Natural killer cell (primary cell): ENCODE measurements at regions of chr10 and their contacts with region 1.

Region 1: DNA sequence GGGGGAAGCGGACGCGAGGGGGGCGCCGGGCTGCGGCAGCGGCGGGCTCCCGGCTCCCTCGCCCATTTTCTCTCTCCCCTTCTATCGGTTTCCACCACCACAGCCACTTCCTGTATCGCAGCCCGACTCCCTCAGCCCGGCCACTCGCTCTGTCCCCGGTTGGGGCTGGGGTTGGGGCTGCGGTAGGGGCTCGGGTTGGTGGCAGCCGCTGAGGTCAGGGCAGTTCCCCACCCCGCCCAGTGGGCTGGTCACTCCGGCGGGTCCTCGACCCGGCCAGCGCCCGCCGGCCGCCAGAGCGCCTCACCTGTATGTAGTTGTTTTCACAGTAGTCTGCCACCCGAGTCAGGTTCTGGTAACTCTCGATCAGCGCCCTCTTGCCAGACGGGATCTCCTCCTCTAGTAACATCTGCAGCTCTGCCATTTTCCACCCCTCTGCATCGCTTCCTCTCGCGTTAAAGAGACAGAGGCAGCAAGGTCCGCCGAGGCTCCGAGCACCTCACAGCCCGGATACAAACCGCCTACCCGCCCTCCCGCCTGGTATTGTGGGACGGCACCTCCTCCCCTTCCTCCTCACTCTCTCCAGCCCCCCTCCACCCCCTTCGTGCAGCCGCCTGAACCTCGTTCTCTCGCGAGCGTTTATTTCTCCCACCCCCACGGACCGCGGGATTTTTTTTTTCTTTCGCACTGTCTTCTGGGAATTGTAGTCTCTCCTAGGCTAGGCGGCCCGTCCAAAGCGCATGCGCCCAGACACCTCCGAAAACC is at the start of gene ABI1:
- DNase-seq: peak; percentile 92 to 100
- ATAC-seq: peak; percentile 83 to 91 (median 86)
- H3K4me3 ChIP-seq: peak within 1 kb of the TSS; percentile 78
- H3K4me3 Mint-ChIP-seq: peak within 1 kb of the TSS; percentile 95
- H3K27ac ChIP-seq: peak within 1 kb of the TSS; percentile 91
- H3K27ac Mint-ChIP-seq: peak within 1 kb of the TSS; percentile 94 to 98
- H3K4me1 ChIP-seq: peaks cover 26% of the 10 kb centered on the region
- H3K4me1 Mint-ChIP-seq: peaks cover 44 to 48% of the 10 kb centered on the region in 2 donors
- H3K27me3 ChIP-seq: no peaks in the 10 kb centered on the region
- H3K27me3 Mint-ChIP-seq: peaks cover 3 to 7% of the 10 kb centered on the region in 2 donors
- CTCF ChIP-seq: no peak
- total RNA-seq, gene ABI1: 94.8 to 116 (median 113) TPM

Region 2: DNA sequence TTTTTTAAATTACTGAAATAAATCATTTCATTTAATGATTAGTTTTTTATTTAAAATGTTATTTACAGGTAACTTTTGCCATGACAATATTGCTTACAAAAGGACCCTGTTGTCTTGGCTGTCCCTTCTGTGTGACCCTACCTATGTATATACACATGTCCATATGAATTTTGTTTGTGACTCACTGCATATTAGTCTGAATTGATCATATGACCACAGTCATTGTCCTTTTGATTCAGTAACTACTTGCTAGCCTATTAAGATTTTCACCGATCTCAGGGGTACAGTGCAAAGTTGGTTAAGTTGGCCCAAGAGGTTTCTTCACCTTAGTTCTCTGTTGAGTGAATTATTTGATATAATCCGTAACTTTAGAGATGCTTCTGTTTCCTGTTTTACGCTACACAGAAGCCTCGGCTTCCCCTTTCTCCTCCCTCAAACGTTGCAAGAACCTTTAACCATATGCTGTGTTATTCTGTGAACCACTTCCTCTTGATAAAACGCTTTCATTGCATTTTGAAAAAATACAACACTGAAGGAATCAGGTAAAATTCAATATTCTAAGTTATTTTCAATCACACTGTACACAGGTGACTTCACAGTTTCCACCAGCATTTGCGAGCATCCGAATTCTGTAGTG is 378.6 kb before region 1 on chr10:
- intact Hi-C with region 1: loop called (anchors 10 kb)
- DNase-seq: peak in 1 of 2 donors; percentile 82
- ATAC-seq: peak; percentile 42 to 82 (median 71)
- H3K4me3 ChIP-seq: peak overlapping the region; percentile 20
- H3K4me3 Mint-ChIP-seq: peak overlapping the region; percentile 90
- H3K27ac ChIP-seq: peak overlapping the region; percentile 91
- H3K27ac Mint-ChIP-seq: peak overlapping the region; percentile 97 to 98
- H3K4me1 ChIP-seq: peaks cover 69% of the 10 kb centered on the region
- H3K4me1 Mint-ChIP-seq: peaks cover 74 to 78% of the 10 kb centered on the region in 2 donors
- H3K27me3 ChIP-seq: no peaks in the 10 kb centered on the region
- H3K27me3 Mint-ChIP-seq: no peaks in the 10 kb centered on the region
- CTCF ChIP-seq: no peak

Region 3: GRCh38 chr10:26779176-26779860 is 81.3 kb before region 1 on chr10:
- intact Hi-C with region 1: loop called (anchors 5 kb)
- DNase-seq: no peak
- ATAC-seq: no peak
- H3K4me3 ChIP-seq: no peak overlapping the region
- H3K4me3 Mint-ChIP-seq: no peak overlapping the region
- H3K27ac ChIP-seq: no peak overlapping the region
- H3K27ac Mint-ChIP-seq: peak overlapping the region; percentile 82 to 86
- H3K4me1 ChIP-seq: peaks cover 23% of the 10 kb centered on the region
- H3K4me1 Mint-ChIP-seq: peaks cover 91 to 93% of the 10 kb centered on the region in 2 donors
- H3K27me3 ChIP-seq: no peaks in the 10 kb centered on the region
- H3K27me3 Mint-ChIP-seq: no peaks in the 10 kb centered on the region
- CTCF ChIP-seq: no peak

Region 4: GRCh38 chr10:26829810-26830515 is 30.7 kb before region 1 on chr10:
- intact Hi-C with region 1: no loop called
- DNase-seq: no peak
- ATAC-seq: peak; percentile 49 to 69 (median 50)
- H3K4me3 ChIP-seq: no peak overlapping the region
- H3K4me3 Mint-ChIP-seq: peak overlapping the region; percentile 57
- H3K27ac ChIP-seq: peak overlapping the region; percentile 3
- H3K27ac Mint-ChIP-seq: peak overlapping the region; percentile 65 to 79
- H3K4me1 ChIP-seq: peaks cover 6% of the 10 kb centered on the region
- H3K4me1 Mint-ChIP-seq: peaks cover 78 to 82% of the 10 kb centered on the region in 2 donors
- H3K27me3 ChIP-seq: no peaks in the 10 kb centered on the region
- H3K27me3 Mint-ChIP-seq: no peaks in the 10 kb centered on the region
- CTCF ChIP-seq: no peak

Region 5: DNA sequence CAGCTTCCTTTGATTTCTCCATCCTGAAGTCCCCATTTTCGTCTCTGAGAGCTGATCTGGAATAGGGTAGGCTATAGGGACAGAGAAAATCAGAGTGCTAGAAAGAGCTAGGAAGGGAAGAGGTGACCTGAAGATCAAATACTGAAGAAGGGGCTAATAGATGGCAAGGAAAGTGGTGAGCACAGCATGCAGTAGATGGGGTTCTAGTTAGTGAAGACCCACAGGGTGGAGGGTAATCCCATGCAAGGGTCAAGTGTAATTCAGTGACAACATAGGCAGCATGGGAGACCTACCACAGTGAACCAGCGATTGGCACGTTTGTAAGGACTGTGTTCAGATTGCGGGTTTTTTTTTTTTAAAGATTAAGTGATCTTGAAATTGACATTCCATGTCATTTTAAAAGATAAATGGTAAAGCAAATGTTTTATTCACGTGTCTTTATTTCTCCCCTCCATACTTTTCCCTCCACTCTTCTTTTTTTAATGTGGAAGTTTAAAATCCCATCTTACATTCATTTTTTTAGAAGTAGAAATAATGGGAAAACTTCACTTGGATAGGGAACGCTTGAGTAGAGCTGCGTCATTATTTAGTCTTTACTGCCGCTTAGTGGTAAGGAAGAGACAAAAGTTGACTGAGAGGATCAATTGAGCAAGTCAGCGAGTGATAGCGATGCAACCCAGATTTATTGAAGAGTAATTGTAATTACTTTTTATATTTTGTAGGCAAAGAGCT is 21.1 kb after region 1 on chr10:
- intact Hi-C with region 1: loop called (anchors 2 kb)
- DNase-seq: peak in 1 of 2 donors; percentile 70
- ATAC-seq: peak; percentile 71 to 93 (median 81)
- H3K4me3 ChIP-seq: no peak overlapping the region
- H3K4me3 Mint-ChIP-seq: no peak overlapping the region
- H3K27ac ChIP-seq: no peak overlapping the region
- H3K27ac Mint-ChIP-seq: no peak overlapping the region
- H3K4me1 ChIP-seq: no peaks in the 10 kb centered on the region
- H3K4me1 Mint-ChIP-seq: no peaks in the 10 kb centered on the region
- H3K27me3 ChIP-seq: peaks cover 6% of the 10 kb centered on the region
- H3K27me3 Mint-ChIP-seq: peaks cover 14 to 40% of the 10 kb centered on the region in 2 donors
- CTCF ChIP-seq: peak; percentile 80

Region 6: GRCh38 chr10:26946102-26946811 is 85.6 kb after region 1 on chr10:
- intact Hi-C with region 1: no loop called
- DNase-seq: no peak
- ATAC-seq: no peak
- H3K4me3 ChIP-seq: no peak overlapping the region
- H3K4me3 Mint-ChIP-seq: no peak overlapping the region
- H3K27ac ChIP-seq: no peak overlapping the region
- H3K27ac Mint-ChIP-seq: no peak overlapping the region
- H3K4me1 ChIP-seq: no peaks in the 10 kb centered on the region
- H3K4me1 Mint-ChIP-seq: no peaks in the 10 kb centered on the region
- H3K27me3 ChIP-seq: peaks cover 4% of the 10 kb centered on the region
- H3K27me3 Mint-ChIP-seq: peaks cover 11 to 13% of the 10 kb centered on the region in 2 donors
- CTCF ChIP-seq: no peak

Region 7: GRCh38 chr10:27223964-27224363 is 363.3 kb after region 1 on chr10:
- intact Hi-C with region 1: loop called (anchors 10 kb)
- DNase-seq: peak in 1 of 2 donors; percentile 79
- ATAC-seq: no peak
- H3K4me3 ChIP-seq: no peak overlapping the region
- H3K4me3 Mint-ChIP-seq: peak overlapping the region; percentile 86
- H3K27ac ChIP-seq: no peak overlapping the region
- H3K27ac Mint-ChIP-seq: peak overlapping the region; percentile 40 to 86
- H3K4me1 ChIP-seq: peaks cover 32% of the 10 kb centered on the region
- H3K4me1 Mint-ChIP-seq: peaks cover 26 to 29% of the 10 kb centered on the region in 2 donors
- H3K27me3 ChIP-seq: no peaks in the 10 kb centered on the region
- H3K27me3 Mint-ChIP-seq: no peaks in the 10 kb centered on the region
- CTCF ChIP-seq: peak; percentile 72